CD8-positive, alpha-beta T cell (primary cell): ENCODE measurements at regions of chr1 and their contacts with region 1.

Region 1: GRCh38 chr1:151254217-151255213 is at the start of gene PSMD4:
- DNase-seq: peak; percentile 86 to 98 (median 93)
- ATAC-seq: peak; percentile 89
- H3K4me3 ChIP-seq: peak within 1 kb of the TSS; percentile 66 to 90
- H3K4me3 Mint-ChIP-seq: peak within 1 kb of the TSS; percentile 98
- H3K27ac ChIP-seq: peak within 1 kb of the TSS; percentile 53 to 81
- H3K27ac Mint-ChIP-seq: peak within 1 kb of the TSS; percentile 98
- H3K4me1 ChIP-seq: peaks cover 10% of the 10 kb centered on the region
- H3K4me1 Mint-ChIP-seq: peaks cover 32% of the 10 kb centered on the region
- H3K27me3 ChIP-seq: no peaks in the 10 kb centered on the region
- H3K27me3 Mint-ChIP-seq: no peaks in the 10 kb centered on the region
- CTCF ChIP-seq: no peak
- total RNA-seq, gene PSMD4: 55.1 to 56.7 TPM

Region 2: DNA sequence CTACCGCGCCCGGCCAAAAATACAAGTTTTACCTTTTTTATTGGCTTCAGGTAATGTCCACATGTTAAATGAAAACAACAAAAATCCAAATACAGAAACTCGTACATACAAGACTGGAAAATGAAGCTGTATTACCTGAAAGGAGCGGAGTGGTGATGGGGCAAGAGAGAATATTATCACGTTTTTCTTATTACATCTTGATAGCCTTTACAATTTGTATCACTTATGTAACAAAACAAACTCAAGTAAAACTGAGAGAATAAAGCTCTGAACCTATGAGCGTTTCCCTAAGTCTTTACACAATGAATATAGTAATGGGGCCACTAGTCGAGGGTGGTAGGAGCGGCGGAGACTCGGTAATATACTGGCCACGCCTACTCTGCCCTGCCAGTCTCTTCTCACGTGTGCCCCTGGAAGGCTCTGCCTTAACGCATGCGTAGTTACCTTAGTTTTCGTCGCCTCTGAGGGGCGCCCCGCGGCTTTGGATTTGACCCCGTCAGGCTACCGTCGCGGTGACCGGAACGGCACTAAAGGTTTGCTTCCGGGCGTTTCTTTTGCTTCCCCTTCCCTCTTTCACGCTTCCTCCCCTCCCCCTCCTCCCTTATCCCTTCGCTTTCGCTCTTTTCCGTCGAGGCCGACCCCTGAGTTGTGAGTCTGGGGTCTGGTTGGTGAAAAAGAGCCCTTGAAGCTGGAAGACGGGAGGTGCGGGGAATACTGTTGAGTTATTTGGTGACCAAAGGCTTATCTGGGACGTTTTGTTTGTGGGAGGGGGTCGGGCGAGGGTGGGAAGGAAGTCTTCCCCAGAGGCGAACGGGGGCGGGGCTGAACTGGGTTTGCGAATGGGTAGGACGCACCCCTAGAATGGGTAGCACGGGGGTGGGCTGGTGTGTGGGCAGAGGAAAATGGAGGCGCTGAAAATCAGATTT is 328.4 kb before region 1 on chr1 and contains the start of gene SETDB1:
- CTCF ChIA-PET with region 1: interaction called, 3 read pairs
- POLR2A ChIA-PET with region 1: no interaction called
- intact Hi-C with region 1: loop called in 1 of 2 experiments (anchors 10 kb)
- DNase-seq: peak; percentile 84 to 98 (median 91)
- ATAC-seq: peak; percentile 96
- H3K4me3 ChIP-seq: peak within 1 kb of the TSS; percentile 91 to 93
- H3K4me3 Mint-ChIP-seq: peak within 1 kb of the TSS; percentile 94
- H3K27ac ChIP-seq: peak within 1 kb of the TSS; percentile 79 to 93
- H3K27ac Mint-ChIP-seq: peak within 1 kb of the TSS; percentile 93
- H3K4me1 ChIP-seq: peaks cover 17% of the 10 kb centered on the region
- H3K4me1 Mint-ChIP-seq: peaks cover 31% of the 10 kb centered on the region
- H3K27me3 ChIP-seq: no peaks in the 10 kb centered on the region
- H3K27me3 Mint-ChIP-seq: no peaks in the 10 kb centered on the region
- CTCF ChIP-seq: no peak
- total RNA-seq, gene SETDB1: 44.1 to 47.4 TPM

Region 3: GRCh38 chr1:151098126-151098525 is 156.4 kb before region 1 on chr1:
- CTCF ChIA-PET with region 1: interaction called, 19 read pairs
- POLR2A ChIA-PET with region 1: interaction called, 8 read pairs
- intact Hi-C with region 1: loop called in 1 of 2 experiments (anchors 5 kb)
- DNase-seq: no peak
- ATAC-seq: no peak
- H3K4me3 ChIP-seq: no peak overlapping the region
- H3K4me3 Mint-ChIP-seq: no peak overlapping the region
- H3K27ac ChIP-seq: no peak overlapping the region
- H3K27ac Mint-ChIP-seq: no peak overlapping the region
- H3K4me1 ChIP-seq: no peaks in the 10 kb centered on the region
- H3K4me1 Mint-ChIP-seq: no peaks in the 10 kb centered on the region
- H3K27me3 ChIP-seq: no peaks in the 10 kb centered on the region
- H3K27me3 Mint-ChIP-seq: no peaks in the 10 kb centered on the region
- CTCF ChIP-seq: no peak

Region 4: DNA sequence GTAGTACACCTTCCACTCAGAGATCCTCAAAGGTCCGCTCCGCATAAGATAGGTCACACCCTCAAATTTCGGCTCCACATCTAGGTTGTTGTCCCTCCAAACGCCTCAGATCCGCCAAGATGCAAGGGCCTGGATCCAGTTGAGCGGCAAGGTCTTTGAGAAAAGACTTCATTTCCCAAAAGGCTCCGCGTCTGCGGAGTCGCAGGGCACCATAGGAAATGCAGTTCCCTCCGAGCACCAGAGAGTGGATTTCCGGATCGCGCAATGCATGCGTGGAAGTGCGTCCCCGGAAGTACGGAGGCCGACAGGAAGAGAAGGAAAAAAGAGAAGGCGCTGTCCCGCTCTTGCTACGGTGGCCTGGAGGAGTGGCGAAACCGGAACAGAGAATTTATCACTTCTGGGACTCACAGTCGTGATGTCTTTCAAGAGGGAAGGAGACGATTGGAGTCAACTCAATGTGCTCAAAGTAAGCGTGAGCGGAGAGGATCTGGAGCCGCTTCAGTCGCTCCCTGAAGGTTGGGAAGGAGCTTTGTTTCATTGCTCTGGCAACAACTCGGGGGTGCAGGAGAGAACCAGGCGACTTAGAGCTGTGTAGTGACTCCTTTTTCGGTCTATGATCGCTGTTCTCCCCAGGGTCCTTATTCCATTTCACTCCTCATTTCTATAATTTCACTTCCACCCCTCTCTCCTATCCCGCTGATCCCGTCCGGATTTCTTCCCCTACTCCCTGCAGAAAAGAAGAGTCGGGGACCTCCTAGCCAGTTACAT is 88.6 kb before region 1 on chr1 and contains the starts of genes LYSMD1 and SCNM1:
- CTCF ChIA-PET with region 1: interaction called, 5 read pairs
- POLR2A ChIA-PET with region 1: interaction called, 3 read pairs
- intact Hi-C with region 1: loop called in 1 of 2 experiments (anchors 1 kb)
- DNase-seq: peak; percentile 91 to 99 (median 95)
- ATAC-seq: peak; percentile 96
- H3K4me3 ChIP-seq: peak within 1 kb of the TSS; percentile 82 to 94
- H3K4me3 Mint-ChIP-seq: peak within 1 kb of the TSS; percentile 95
- H3K27ac ChIP-seq: peak within 1 kb of the TSS; percentile 72 to 77
- H3K27ac Mint-ChIP-seq: peak within 1 kb of the TSS; percentile 94
- H3K4me1 ChIP-seq: peaks cover 29% of the 10 kb centered on the region
- H3K4me1 Mint-ChIP-seq: peaks cover 50% of the 10 kb centered on the region
- H3K27me3 ChIP-seq: no peaks in the 10 kb centered on the region
- H3K27me3 Mint-ChIP-seq: no peaks in the 10 kb centered on the region
- CTCF ChIP-seq: no peak
- total RNA-seq, gene LYSMD1: 0.49 to 0.94 TPM
- total RNA-seq, gene SCNM1: 35.0 to 40.4 TPM

Region 5: DNA sequence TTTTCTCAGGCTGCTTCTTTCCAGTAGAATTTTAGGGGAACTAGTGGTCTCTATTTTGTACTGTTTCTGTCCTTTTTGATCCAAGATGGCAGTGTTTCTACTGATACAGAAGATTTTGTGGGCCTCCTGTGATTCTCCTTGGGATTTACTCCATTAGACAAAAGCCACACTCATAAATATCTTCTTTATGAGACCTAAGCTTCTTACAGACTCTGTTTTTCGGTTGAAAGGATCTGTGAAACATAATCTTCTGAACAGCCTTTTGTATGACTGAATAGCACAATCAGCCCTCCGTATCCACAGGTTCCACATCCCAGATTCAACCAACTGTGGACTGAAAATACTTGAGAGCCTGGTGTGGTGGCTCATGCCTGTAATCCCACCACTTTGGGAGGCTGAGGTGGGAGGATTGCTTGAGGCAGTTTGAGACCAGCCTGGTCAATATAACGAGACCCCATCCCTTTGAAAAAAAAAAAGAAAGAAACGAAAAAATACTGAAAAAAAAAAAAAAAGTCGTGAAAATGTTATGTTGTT is 10.8 kb before region 1 on chr1:
- CTCF ChIA-PET with region 1: interaction called, 11 read pairs
- POLR2A ChIA-PET with region 1: no interaction called
- intact Hi-C with region 1: no loop called
- DNase-seq: no peak
- ATAC-seq: no peak
- H3K4me3 ChIP-seq: no peak overlapping the region
- H3K4me3 Mint-ChIP-seq: no peak overlapping the region
- H3K27ac ChIP-seq: no peak overlapping the region
- H3K27ac Mint-ChIP-seq: peak overlapping the region; percentile 49
- H3K4me1 ChIP-seq: no peaks in the 10 kb centered on the region
- H3K4me1 Mint-ChIP-seq: no peaks in the 10 kb centered on the region
- H3K27me3 ChIP-seq: no peaks in the 10 kb centered on the region
- H3K27me3 Mint-ChIP-seq: no peaks in the 10 kb centered on the region
- CTCF ChIP-seq: no peak

Region 6: GRCh38 chr1:151399890-151400495 is 145.5 kb after region 1 on chr1:
- CTCF ChIA-PET with region 1: no interaction called
- POLR2A ChIA-PET with region 1: no interaction called
- intact Hi-C with region 1: loop called in 1 of 2 experiments (anchors 2 kb)
- DNase-seq: peak in 1 of 9 experiments; percentile 13
- ATAC-seq: no peak
- H3K4me3 ChIP-seq: peak overlapping the region; percentile 90 to 94
- H3K4me3 Mint-ChIP-seq: peak overlapping the region; percentile 89
- H3K27ac ChIP-seq: peak overlapping the region; percentile 93 to 94
- H3K27ac Mint-ChIP-seq: peak overlapping the region; percentile 97
- H3K4me1 ChIP-seq: peaks cover 16% of the 10 kb centered on the region
- H3K4me1 Mint-ChIP-seq: peaks cover 27% of the 10 kb centered on the region
- H3K27me3 ChIP-seq: no peaks in the 10 kb centered on the region
- H3K27me3 Mint-ChIP-seq: no peaks in the 10 kb centered on the region
- CTCF ChIP-seq: no peak